H1 (cell line): ENCODE measurements at regions of chr7 and their contacts with region 1.

Region 1: DNA sequence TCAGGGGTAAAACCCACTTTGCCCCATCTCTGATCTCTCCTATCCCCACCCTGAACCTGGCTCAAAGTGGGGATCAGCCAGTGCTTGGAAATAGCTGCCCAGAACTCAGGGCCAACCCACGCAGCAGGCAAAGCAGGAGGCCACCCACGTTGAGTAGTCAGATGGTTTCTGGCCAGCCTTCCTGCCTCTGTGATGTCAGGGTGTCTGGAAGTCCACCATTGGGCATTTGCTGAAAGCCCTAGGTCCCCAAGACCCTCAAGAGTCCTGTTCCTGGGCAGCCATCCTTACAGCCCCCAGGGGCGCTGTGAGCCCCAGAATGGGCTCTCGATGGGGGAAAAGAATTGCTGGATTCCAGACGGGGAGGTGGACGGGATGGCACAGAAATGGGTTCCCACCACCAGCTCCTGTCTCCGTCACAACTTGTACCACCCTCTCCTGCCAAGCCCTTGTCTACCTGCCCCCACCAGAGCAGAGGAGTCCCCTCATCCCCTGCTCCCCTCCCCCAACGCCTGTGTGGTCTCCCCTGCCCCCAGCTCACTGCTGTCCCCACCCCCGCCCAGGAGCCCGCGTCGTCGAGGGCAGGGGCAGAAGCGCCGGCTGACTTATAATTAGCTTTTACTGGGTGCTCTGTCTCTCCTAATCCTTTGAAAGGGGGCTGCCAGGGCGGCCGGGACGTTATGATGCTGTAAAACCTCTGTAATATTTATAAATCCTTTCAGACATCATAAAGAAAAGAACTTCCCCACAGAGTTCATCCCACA is 3.9 kb downstream of the MYL10 start:
- DNase-seq: no peak
- H3K4me3 ChIP-seq: no peak overlapping the region
- H3K27ac ChIP-seq: no peak overlapping the region
- H3K4me1 ChIP-seq: peaks cover 0 to 26% (median 17%) of the 10 kb centered on the region in 4 experiments; a peak in 6 of 7 replicates
- H3K27me3 ChIP-seq: no peaks in the 10 kb centered on the region
- CTCF ChIP-seq: peak in 2 of 3 experiments; percentile 26 to 54; a peak in 2 of 4 replicates
- EP300 ChIP-seq: no peak
- POLR2A ChIP-seq: no peak
- RAD21 ChIP-seq: peak; percentile 37 to 53; a peak in 3 of 4 replicates

Region 2: DNA sequence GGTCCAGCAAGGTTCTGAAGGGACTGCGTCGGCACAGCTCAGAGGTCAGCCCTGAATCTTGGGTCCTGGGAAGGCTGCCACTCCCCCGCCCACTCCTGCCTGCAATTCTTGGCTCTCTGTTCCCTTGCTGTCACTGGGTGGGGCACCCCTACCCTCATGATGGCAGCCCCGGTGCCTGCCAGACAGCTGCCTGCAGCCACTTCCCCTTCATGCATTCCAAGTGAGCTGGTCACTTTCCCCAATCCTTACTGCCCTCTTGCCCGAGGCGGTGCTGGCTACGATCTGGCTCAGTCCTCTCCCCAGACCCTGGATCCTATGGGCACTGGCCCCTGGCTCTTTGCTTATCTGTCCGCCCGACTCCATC is 10.3 kb before region 1 on chr7:
- CTCF ChIA-PET with region 1: interaction called, 10 read pairs
- POLR2A ChIA-PET with region 1: interaction called, 3 read pairs
- DNase-seq: no peak
- H3K4me3 ChIP-seq: no peak overlapping the region
- H3K27ac ChIP-seq: no peak overlapping the region
- H3K4me1 ChIP-seq: peaks cover 4 to 21% (median 14%) of the 10 kb centered on the region in 4 experiments; a peak in 6 of 7 replicates
- H3K27me3 ChIP-seq: no peaks in the 10 kb centered on the region
- CTCF ChIP-seq: no peak
- EP300 ChIP-seq: no peak
- POLR2A ChIP-seq: no peak
- RAD21 ChIP-seq: no peak

Region 3: DNA sequence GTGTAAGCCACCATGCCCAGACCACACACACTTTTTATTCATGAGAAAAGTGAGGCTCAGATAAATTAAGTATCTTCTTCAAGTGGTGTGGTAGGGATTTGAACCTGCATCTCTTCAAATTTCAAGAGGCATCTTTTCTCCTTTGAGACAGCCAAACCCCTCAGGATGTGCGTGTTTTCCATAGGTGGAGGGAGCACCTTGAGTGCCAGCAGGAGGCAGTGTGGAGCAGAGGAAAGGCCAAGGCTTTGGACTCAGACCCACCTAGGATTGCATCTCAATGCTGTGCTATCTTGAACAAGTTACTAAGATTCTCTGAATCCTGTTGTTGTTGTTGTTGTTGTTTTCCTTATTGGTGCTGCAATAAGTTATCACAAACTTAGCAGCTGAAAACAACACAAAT is 44.1 kb after region 1 on chr7:
- CTCF ChIA-PET with region 1: interaction called, 15 read pairs
- POLR2A ChIA-PET with region 1: interaction called, 3 read pairs
- DNase-seq: no peak
- H3K4me3 ChIP-seq: no peak overlapping the region
- H3K27ac ChIP-seq: no peak overlapping the region
- H3K4me1 ChIP-seq: peaks cover 0 to 12% (median 6%) of the 10 kb centered on the region in 4 experiments; a peak in 6 of 7 replicates
- H3K27me3 ChIP-seq: no peaks in the 10 kb centered on the region
- CTCF ChIP-seq: peak; percentile 50 to 77 (median 70)
- EP300 ChIP-seq: no peak
- POLR2A ChIP-seq: no peak
- RAD21 ChIP-seq: peak; percentile 33 to 63; a peak in 3 of 4 replicates